Testis (tissue), 5 donors: ENCODE measurements at regions of chr11 and their contacts with region 1.

Region 1: GRCh38 chr11:67389477-67389876 is 2.3 kb upstream of the RAD9A start:
- DNase-seq: no peak
- H3K4me3 ChIP-seq: no peak overlapping the region
- H3K27ac ChIP-seq: no peak overlapping the region
- H3K4me1 ChIP-seq: peaks cover 16% of the 10 kb centered on the region
- H3K27me3 ChIP-seq: no peaks in the 10 kb centered on the region
- CTCF ChIP-seq: peak; percentile 35 to 46 (median 37)
- POLR2A ChIP-seq: no peak

Region 2: GRCh38 chr11:67353317-67354074 is 36.0 kb before region 1 on chr11 and contains the start of gene POLD4:
- intact Hi-C with region 1: loop called (anchors 5 kb)
- DNase-seq: peak; percentile 99
- H3K4me3 ChIP-seq: peak within 1 kb of the TSS; percentile 72 to 78
- H3K27ac ChIP-seq: peak within 1 kb of the TSS; percentile 95 to 97
- H3K4me1 ChIP-seq: peaks cover 43% of the 10 kb centered on the region
- H3K27me3 ChIP-seq: no peaks in the 10 kb centered on the region
- CTCF ChIP-seq: no peak
- POLR2A ChIP-seq: peak; percentile 52
- total RNA-seq, gene POLD4: 53.8 to 59.1 TPM